ENCODE measurements at regions of chr5 and their contacts with region 1.

Region 1: GRCh38 chr5:132963175-132964104 is at the start of gene AFF4:
- DNase-seq: peak; percentile 95 to 96
- ATAC-seq: peak; percentile 86 to 92
- H3K4me3 ChIP-seq: peak within 1 kb of the TSS; percentile 89 to 96 (median 92)
- H3K27ac ChIP-seq: peak within 1 kb of the TSS; percentile 97 to 100 (median 99)
- H3K4me1 ChIP-seq: peaks cover 33 to 34% of the 10 kb centered on the region in 2 donors
- H3K27me3 ChIP-seq: no peaks in the 10 kb centered on the region
- CTCF ChIP-seq: peak in 1 of 5 experiments; percentile 43
- POLR2A ChIP-seq: peak; percentile 99
- total RNA-seq, gene AFF4: 36.7 to 153 (median 67.5) TPM

Region 2: GRCh38 chr5:132866342-132867045 is 96.9 kb before region 1 on chr5 and contains the starts of genes GDF9 and UQCRQ:
- in situ Hi-C with region 1: no loop called
- intact Hi-C with region 1: loop called (anchors 5 kb)
- DNase-seq: peak; percentile 95 to 96
- ATAC-seq: peak; percentile 99
- H3K4me3 ChIP-seq: peak within 1 kb of the TSS; percentile 63 to 92 (median 85)
- H3K27ac ChIP-seq: peak within 1 kb of the TSS; percentile 83 to 93 (median 88)
- H3K4me1 ChIP-seq: peaks cover 27 to 31% of the 10 kb centered on the region in 2 donors
- H3K27me3 ChIP-seq: no peaks in the 10 kb centered on the region
- CTCF ChIP-seq: no peak
- POLR2A ChIP-seq: peak; percentile 91 to 93
- total RNA-seq, gene GDF9: 0.13 to 2.5 (median 0.46) TPM in 3 of 4 donors, not detected in the other
- total RNA-seq, gene UQCRQ: 273 to 566 (median 326) TPM

Region 3: GRCh38 chr5:132905867-132906295 is 57.6 kb before region 1 on chr5:
- in situ Hi-C with region 1: no loop called
- intact Hi-C with region 1: loop called (anchors 5 kb)
- DNase-seq: no peak
- ATAC-seq: peak; percentile 87 to 95
- H3K4me3 ChIP-seq: no peak overlapping the region
- H3K27ac ChIP-seq: peak overlapping the region; percentile 55 to 58 (median 57)
- H3K4me1 ChIP-seq: peaks cover 14 to 27% of the 10 kb centered on the region in 2 donors
- H3K27me3 ChIP-seq: no peaks in the 10 kb centered on the region
- CTCF ChIP-seq: peak in 3 of 5 experiments; percentile 33 to 48 (median 35)
- POLR2A ChIP-seq: no peak

Region 4: GRCh38 chr5:132976852-132977251 is 13.4 kb after region 1 on chr5:
- in situ Hi-C with region 1: no loop called
- intact Hi-C with region 1: loop called (anchors 1 kb)
- DNase-seq: no peak
- ATAC-seq: no peak
- H3K4me3 ChIP-seq: no peak overlapping the region
- H3K27ac ChIP-seq: no peak overlapping the region
- H3K4me1 ChIP-seq: no peaks in the 10 kb centered on the region
- H3K27me3 ChIP-seq: no peaks in the 10 kb centered on the region
- CTCF ChIP-seq: no peak
- POLR2A ChIP-seq: no peak

Region 5: DNA sequence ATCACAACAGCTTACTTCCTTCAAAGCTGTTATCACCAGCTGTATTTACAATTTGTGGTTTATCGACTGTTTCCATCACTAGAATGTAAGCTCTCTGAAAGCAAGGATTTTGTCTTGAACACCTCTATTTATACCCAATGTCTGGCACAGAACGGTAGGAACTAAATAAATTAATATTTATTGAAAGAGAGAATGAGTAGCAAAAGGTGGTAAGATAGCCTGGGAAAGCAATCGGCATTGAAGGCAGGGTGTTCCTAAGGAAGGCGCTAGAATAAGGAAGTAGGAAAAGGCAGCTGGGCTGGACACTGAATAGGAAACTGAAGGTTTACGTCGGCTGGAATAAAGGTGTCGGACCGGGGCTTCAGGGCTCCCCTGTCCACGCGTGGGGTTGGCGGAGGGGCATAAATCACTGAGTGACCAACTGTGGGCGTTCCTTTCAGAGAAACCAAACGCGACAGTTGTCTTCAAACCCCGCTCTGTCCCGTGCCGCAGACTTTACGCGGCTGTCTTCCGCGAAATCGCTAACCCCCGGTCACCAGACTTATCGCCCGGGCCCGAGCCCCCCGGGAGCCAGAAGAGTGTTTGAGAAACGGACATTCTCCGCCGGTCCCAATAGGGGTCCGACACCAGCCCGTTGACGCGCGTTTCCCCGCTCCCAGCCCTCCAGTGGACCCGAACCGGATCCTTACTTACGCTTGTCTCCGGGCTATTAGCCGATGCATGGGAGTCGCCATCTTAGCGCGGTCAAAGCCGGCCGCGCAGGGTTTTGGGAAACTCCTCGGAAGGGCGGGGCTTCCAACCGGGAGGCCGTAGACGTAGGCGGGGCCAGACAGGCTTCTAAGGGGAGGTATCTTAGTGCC is 62.6 kb after region 1 on chr5 and contains the start of gene ZCCHC10:
- in situ Hi-C with region 1: no loop called
- intact Hi-C with region 1: loop called (anchors 1 kb)
- DNase-seq: peak; percentile 83 to 86
- ATAC-seq: peak; percentile 98
- H3K4me3 ChIP-seq: peak within 1 kb of the TSS; percentile 75 to 100 (median 92)
- H3K27ac ChIP-seq: peak within 1 kb of the TSS; percentile 90 to 99 (median 97)
- H3K4me1 ChIP-seq: peaks cover 11 to 15% of the 10 kb centered on the region in 2 donors
- H3K27me3 ChIP-seq: no peaks in the 10 kb centered on the region
- CTCF ChIP-seq: no peak
- POLR2A ChIP-seq: peak; percentile 73 to 83
- total RNA-seq, gene ZCCHC10: 8.9 to 28.9 (median 18.5) TPM

Region 6: GRCh38 chr5:133051580-133052332 is 88.3 kb after region 1 on chr5 and contains the start of gene HSPA4:
- in situ Hi-C with region 1: no loop called
- intact Hi-C with region 1: loop called (anchors 1 kb)
- DNase-seq: peak; percentile 96 to 97
- ATAC-seq: peak; percentile 91 to 95
- H3K4me3 ChIP-seq: peak within 1 kb of the TSS; percentile 82 to 97 (median 94)
- H3K27ac ChIP-seq: peak within 1 kb of the TSS; percentile 92 to 100 (median 98)
- H3K4me1 ChIP-seq: peaks cover 46 to 51% of the 10 kb centered on the region in 2 donors
- H3K27me3 ChIP-seq: no peaks in the 10 kb centered on the region
- CTCF ChIP-seq: no peak
- POLR2A ChIP-seq: peak; percentile 94 to 95
- total RNA-seq, gene HSPA4: 62.6 to 96.4 (median 74.1) TPM